ENCODE measurements at regions of chr12 and their contacts with region 1.

Region 1: GRCh38 chr12:51951199-51951842 is at the start of gene ACVR1B:
- DNase-seq: peak; percentile 94
- ATAC-seq: peak; percentile 98
- H3K4me3 Mint-ChIP-seq: peak within 1 kb of the TSS; percentile 90
- H3K27ac Mint-ChIP-seq: peak within 1 kb of the TSS; percentile 76
- H3K4me1 Mint-ChIP-seq: peaks cover 40% of the 10 kb centered on the region
- H3K27me3 Mint-ChIP-seq: peaks cover 10% of the 10 kb centered on the region
- total RNA-seq, gene ACVR1B: 10.1 to 12.7 TPM

Region 2: GRCh38 chr12:50283229-50283923 is 1667.9 kb before region 1 on chr12 and contains the start of gene LIMA1:
- CTCF ChIA-PET with region 1: no interaction called
- POLR2A ChIA-PET with region 1: no interaction called
- intact Hi-C with region 1: loop called in 1 of 2 experiments (anchors 5 kb)
- DNase-seq: peak; percentile 96
- ATAC-seq: peak; percentile 98
- H3K4me3 Mint-ChIP-seq: peak within 1 kb of the TSS; percentile 91
- H3K27ac Mint-ChIP-seq: peak within 1 kb of the TSS; percentile 88
- H3K4me1 Mint-ChIP-seq: peaks cover 20% of the 10 kb centered on the region
- H3K27me3 Mint-ChIP-seq: no peaks in the 10 kb centered on the region
- total RNA-seq, gene LIMA1: 69.7 to 90.4 TPM

Region 3: GRCh38 chr12:51811206-51812202 is 139.8 kb before region 1 on chr12:
- CTCF ChIA-PET with region 1: no interaction called
- POLR2A ChIA-PET with region 1: no interaction called
- intact Hi-C with region 1: no loop called
- DNase-seq: no peak
- ATAC-seq: no peak
- H3K4me3 Mint-ChIP-seq: no peak overlapping the region
- H3K27ac Mint-ChIP-seq: no peak overlapping the region
- H3K4me1 Mint-ChIP-seq: peaks cover 9% of the 10 kb centered on the region
- H3K27me3 Mint-ChIP-seq: no peaks in the 10 kb centered on the region

Region 4: DNA sequence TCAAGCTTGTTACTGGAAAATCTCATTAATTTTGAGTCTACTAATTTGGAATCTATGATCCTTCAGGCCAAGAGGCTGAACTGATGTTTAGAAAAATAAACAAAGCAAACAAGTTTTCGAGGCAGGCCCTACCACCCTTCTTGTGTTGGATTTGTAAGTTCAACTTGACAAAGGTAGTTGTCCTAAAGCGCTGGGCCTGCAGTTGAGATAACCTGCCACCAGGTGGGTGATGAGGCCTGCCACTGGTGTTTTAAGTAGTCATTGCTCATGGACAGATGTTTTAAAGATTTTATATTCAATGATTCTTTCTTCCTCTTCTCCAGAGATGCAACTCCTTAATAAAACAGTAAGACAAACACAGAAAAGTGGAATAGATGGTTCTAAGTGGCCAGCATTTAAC is 24.6 kb before region 1 on chr12:
- CTCF ChIA-PET with region 1: interaction called, 11 read pairs
- POLR2A ChIA-PET with region 1: no interaction called
- intact Hi-C with region 1: no loop called
- DNase-seq: peak; percentile 81
- ATAC-seq: peak; percentile 61
- H3K4me3 Mint-ChIP-seq: no peak overlapping the region
- H3K27ac Mint-ChIP-seq: no peak overlapping the region
- H3K4me1 Mint-ChIP-seq: peaks cover 11% of the 10 kb centered on the region
- H3K27me3 Mint-ChIP-seq: no peaks in the 10 kb centered on the region

Region 5: DNA sequence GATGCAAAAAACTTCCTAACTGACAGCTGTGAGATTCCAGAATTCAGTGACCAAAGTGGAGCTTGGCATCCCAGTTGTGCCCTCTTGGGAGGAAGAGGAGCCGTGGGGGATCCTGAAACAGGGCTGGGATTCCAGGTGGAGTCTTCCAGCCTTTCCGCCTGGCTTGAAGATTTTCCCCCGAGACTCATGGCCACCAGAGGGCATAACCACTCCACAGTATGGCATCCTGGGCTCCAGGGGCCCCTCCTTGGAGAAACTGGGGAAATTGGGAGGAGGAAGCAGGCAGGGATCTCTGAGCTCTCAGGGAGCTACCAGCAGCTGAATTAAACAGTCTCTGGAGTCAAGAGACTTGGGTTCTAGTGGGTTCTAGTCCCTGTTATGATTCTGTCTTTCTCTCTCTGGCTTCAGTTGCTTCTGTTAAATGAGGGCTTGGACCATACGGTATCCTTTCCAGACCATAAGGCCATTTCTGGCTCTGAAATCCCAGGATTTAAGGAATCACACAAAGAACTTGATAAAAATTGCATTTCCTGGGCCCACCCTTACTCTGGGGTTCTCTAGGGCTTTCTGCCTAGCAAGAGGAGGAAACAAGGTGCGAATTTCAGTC is 52.8 kb after region 1 on chr12:
- CTCF ChIA-PET with region 1: no interaction called
- POLR2A ChIA-PET with region 1: no interaction called
- intact Hi-C with region 1: loop called in 1 of 2 experiments (anchors 1 kb)
- DNase-seq: peak; percentile 43
- ATAC-seq: no peak
- H3K4me3 Mint-ChIP-seq: no peak overlapping the region
- H3K27ac Mint-ChIP-seq: no peak overlapping the region
- H3K4me1 Mint-ChIP-seq: peaks cover 13% of the 10 kb centered on the region
- H3K27me3 Mint-ChIP-seq: peaks cover 4% of the 10 kb centered on the region

Region 6: DNA sequence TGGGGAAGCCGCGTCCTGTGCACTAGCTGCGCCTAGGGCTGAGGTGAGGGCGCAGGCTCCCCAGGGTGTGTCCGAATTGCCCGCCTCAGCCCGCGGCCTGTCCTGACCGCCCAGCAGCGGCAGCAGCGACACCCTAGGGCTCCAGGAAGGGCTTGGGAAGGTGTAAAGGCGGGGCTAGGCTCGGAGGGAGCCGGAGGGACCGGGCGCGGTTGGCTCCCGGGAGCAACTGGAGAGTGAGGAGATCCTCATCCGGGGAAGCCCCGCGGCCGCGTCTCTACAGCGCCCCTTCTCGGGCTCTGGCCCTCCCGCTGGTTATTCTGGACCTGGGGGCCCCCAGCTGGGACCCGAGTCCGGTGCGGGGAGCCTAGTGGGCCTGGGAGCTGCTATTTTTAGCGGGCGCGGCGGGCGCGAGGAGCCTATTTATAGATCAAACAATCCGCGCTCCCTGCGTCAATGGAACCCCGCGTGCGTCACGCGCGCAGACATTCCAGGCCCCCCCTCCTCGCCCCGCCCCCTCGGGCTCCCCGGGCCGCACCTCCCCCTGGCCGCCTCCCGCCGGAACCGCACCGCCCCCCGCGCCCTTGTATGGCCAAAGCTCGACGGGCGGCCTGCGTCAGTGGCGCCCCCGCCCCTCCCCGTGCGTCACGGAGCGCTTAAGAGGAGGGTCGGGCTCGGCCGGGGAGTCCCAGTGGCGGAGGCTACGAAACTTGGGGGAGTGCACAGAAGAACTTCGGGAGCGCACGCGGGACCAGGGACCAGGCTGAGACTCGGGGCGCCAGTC is 99.6 kb after region 1 on chr12 and contains the start of gene NR4A1:
- CTCF ChIA-PET with region 1: interaction called, 3 read pairs
- POLR2A ChIA-PET with region 1: no interaction called
- intact Hi-C with region 1: loop called in 1 of 2 experiments (anchors 1 kb)
- DNase-seq: peak; percentile 100
- ATAC-seq: peak; percentile 88
- H3K4me3 Mint-ChIP-seq: peak within 1 kb of the TSS; percentile 92
- H3K27ac Mint-ChIP-seq: peak within 1 kb of the TSS; percentile 91
- H3K4me1 Mint-ChIP-seq: peaks cover 38% of the 10 kb centered on the region
- H3K27me3 Mint-ChIP-seq: no peaks in the 10 kb centered on the region
- total RNA-seq, gene NR4A1: 69.4 to 72.8 TPM

Region 7: DNA sequence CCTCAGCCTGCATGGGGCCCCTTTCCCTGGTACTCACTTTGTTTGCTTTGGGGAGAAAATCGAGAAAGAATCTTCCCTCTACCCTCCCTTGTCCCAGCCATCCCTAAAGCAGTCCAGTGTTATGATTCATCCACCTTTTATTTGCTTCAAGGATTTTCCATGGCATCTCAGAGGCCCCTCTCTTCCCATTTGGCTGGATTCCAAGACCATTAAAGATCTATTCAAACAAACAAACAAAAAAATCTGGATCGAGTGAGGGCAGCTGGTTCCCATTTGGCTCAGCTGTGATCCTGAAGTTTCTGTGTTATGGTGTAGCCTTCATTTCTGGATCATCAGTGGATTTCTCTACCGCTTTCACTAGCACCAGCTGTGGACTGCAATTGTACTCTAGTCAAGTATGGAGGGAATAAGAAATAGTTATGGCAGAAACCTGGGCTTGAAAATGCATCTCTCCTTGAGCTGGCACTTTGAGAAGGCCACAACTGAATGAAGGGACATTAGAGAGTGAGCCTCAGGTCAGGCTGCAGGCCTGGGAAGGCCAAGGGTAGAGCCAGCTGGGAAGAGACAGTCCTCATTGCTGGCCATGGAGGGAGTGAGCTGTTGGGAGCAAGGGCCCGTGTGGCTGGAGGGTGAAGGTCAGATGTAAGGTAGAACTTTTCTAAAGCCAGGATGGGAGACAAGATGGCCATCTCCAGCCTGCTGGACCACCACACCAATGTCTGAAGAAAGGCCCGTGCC is 587.9 kb after region 1 on chr12:
- CTCF ChIA-PET with region 1: no interaction called
- POLR2A ChIA-PET with region 1: no interaction called
- intact Hi-C with region 1: no loop called
- DNase-seq: no peak
- ATAC-seq: no peak
- H3K4me3 Mint-ChIP-seq: no peak overlapping the region
- H3K27ac Mint-ChIP-seq: no peak overlapping the region
- H3K4me1 Mint-ChIP-seq: peaks cover 3% of the 10 kb centered on the region
- H3K27me3 Mint-ChIP-seq: no peaks in the 10 kb centered on the region